Right ventricle myocardium superior (tissue), 1 donor: ENCODE measurements at regions of chr3 and their contacts with region 1.

Region 1: DNA sequence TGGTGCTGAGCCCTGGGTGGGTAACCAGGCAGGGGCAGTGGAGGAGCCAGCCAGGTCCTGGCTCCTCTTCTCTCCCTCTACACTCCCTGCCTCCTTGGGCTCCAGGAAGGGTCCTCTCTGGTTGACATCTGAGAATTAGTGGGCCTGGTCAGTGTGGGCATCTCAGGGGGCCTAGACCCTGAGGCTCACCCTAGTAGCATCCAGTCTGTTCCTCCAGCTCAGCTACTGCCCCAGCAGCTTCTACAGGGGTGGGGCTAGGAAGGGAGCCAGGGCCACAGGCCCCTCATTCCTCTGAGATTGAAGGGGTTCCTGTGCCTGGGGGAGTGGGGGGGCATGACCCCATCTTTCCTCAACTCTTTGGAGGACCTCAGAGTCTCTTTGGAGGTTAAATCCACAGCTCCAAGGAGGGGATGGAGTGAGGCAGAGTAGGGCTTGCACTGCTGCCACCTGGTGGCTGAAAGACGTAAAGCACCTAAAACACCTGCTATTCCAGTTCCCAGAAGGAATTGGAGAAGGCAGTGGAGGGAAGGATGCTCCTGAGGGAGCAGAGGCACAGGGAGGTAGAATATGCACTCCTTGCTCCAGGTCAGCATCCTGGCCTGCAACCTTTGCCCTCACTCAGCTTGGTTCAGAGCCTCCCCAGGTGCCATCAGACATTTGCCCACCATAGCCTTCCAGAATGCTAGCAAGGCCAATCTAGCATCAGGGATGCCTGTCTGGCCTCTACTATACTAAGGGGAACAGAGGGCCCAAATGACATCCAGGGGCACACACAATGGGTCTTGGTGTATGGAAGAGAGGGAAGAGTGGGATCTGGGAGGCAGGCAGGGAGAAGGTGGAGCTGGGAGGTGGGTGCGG is 25.1 kb downstream of the C3orf18 start:
- DNase-seq: peak; percentile 76
- ATAC-seq: peak; percentile 85

Region 2: GRCh38 chr3:50347194-50347918 is 195.1 kb before region 1 on chr3:
- intact Hi-C with region 1: loop called (anchors 5 kb)
- DNase-seq: peak; percentile 77
- ATAC-seq: no peak

Region 3: GRCh38 chr3:50436114-50436674 is 106.2 kb before region 1 on chr3:
- intact Hi-C with region 1: loop called (anchors 1 kb)
- DNase-seq: peak; percentile 80
- ATAC-seq: peak; percentile 89

Region 4: DNA sequence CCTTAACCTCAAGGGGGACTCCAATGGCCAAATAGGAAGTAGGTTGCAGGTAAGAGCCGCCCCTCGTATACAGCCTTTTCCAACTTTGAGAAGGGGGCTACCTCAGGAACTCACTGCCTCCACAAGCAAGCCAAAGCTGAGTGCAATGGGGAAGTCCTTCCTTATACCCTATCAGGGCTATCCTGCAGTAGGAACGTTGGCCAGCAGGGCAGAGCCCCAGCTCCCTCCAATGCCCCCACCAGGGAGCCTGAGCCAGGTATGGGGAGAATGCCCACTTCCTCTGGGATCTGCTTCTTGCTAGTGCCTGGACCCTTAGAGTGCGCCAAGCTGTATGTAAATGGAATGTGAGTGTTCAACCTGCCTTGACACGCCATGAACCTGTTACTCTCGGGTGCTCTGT is 55.2 kb before region 1 on chr3:
- intact Hi-C with region 1: no loop called
- DNase-seq: no peak
- ATAC-seq: no peak

Region 5: GRCh38 chr3:50503504-50504342 is 38.7 kb before region 1 on chr3 and contains the start of gene CACNA2D2:
- intact Hi-C with region 1: no loop called
- DNase-seq: peak; percentile 78
- ATAC-seq: peak; percentile 94
- total RNA-seq, gene CACNA2D2: 1.6 TPM